ENCODE measurements at regions of chr22 and their contacts with region 1.

Region 1: DNA sequence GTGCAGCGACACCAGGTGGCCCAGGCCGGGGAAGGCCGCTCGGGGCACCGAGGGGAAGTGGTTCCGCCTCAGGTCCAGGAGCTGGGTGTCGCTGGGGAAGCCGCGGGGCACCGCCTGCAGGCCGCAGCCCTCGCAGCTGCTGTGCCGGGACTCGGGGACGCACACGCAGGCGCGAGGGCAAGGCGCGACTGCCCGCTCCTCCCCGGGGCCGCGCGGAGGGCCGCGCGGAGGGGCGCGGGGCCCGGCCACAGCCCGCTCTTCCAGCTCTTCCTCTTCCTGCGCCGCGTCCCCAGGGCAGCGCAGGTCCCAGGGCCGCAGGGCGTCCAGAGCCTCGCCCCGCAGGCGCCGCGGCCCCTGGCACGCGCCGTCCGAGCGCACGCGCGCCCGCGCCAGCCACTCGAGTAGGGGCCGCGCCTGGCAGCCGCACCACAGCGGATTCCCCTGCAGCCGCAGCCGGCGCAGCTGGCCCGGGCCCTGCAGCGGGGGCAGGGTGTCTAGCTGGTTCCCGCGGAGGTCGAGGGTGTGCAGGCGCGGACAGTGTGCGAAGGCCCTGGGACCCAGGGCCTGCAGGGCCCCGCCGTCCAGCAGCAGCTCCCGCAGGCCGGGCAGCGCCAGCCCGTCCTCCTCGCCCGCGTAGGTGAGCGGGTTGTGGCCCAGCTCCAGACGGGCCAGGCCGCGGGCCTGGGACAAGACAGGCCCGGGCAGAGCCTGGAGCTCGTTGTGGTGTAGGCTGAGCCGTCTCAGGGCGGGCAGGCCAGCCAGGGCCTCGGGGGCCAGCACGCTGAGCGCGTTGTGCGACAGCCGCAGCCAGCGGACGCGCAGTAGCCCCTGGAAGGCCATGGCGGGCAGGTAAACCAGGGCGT is 2.8 kb downstream of the CHADL start:
- DNase-seq: peak; percentile 83 to 88 (median 86)
- ATAC-seq: peak; percentile 91
- H3K4me3 ChIP-seq: no peak overlapping the region
- H3K27ac ChIP-seq: peak overlapping the region in 3 of 4 donors; percentile 33 to 60 (median 59)
- H3K4me1 ChIP-seq: peaks cover 21% of the 10 kb centered on the region
- H3K27me3 ChIP-seq: no peaks in the 10 kb centered on the region
- CTCF ChIP-seq: peak; percentile 62 to 86 (median 78)
- POLR2A ChIP-seq: peak in 2 of 3 donors; percentile 40 to 41

Region 2: DNA sequence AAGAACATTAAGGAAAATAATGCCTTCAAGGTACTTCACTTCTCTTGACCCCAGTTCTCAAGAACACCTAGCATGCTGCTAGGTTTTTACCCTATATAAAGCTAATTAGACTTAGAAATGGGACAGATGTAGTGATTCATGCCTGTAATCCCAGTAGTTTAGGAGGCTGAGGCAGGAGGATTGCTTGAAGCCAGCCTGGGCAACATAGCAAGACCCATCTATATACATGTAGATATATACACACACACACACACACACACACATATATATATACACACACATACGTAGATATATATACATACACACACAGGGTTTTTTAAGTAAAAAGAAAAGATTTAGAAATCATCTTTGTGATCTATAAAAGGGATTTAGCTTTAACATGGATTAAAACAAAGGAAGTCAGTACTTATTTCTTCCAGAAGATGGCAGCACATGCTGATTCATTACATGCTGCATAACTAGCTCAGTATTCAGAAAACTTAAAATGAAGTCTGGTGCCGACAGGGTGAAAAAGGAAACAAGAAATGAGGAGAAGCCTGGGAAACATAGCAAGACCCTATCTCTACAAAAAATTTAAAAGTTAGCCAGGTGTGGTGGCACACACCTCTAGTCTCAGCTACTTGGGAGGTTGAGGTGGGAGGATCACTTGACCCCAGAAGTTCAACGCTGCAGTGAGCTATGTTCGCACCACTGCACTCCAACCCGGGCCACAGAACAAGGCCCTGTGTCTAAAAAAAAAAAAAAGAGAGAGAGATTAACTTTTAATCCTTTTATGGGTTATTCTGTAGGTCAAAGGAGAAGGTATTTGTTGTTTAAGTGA is 315.2 kb before region 1 on chr22:
- intact Hi-C with region 1: loop called (anchors 10 kb)
- DNase-seq: peak in 1 of 4 donors; percentile 21
- ATAC-seq: peak; percentile 77
- H3K4me3 ChIP-seq: no peak overlapping the region
- H3K27ac ChIP-seq: no peak overlapping the region
- H3K4me1 ChIP-seq: no peaks in the 10 kb centered on the region
- H3K27me3 ChIP-seq: no peaks in the 10 kb centered on the region
- CTCF ChIP-seq: peak; percentile 38 to 89 (median 83)
- POLR2A ChIP-seq: no peak

Region 3: DNA sequence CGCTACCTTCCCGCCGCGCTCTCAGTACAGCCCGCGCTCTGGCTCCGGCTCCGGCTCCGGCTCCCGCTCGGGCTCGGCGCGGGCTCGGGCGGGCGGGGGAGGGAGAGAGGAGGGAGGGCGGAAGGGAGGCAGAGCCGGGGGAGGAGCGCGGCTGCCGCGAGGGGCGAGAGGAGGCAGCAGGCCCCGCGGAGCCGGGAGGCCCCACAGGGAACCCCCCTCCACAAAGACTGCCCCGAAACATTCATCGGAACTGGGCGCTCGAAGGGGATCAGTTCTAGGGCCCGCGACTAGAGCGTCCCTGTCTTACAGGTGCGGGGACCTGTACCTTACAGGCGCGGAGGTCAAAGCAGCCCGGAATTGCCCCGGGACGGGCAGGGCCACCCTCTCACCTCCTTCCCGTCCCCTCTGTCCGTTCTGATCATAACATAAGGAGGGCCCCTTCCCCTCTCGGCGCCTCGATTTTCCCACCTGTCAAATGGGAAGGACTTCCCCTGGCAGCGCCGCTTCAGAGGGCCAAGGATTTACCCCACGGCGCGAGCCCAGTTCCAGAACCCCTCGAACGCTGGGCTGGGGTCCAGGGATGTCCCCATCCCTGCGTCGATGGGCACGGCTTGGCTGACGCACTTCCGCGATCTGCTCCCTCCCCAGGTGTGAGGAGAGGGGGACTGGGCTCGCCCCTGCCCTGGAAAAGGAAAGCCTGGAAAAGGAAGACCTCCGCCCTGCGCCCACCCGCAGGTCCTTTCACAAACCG is 677.3 kb after region 1 on chr22 and contains the start of gene SHISA8:
- intact Hi-C with region 1: no loop called
- DNase-seq: peak; percentile 37 to 65 (median 51)
- ATAC-seq: peak; percentile 57
- H3K4me3 ChIP-seq: no peak within 1 kb of the TSS
- H3K27ac ChIP-seq: no peak within 1 kb of the TSS
- H3K4me1 ChIP-seq: peaks cover 41% of the 10 kb centered on the region
- H3K27me3 ChIP-seq: peaks cover 0 to 43% of the 10 kb centered on the region in 2 donors
- CTCF ChIP-seq: no peak
- POLR2A ChIP-seq: no peak
- total RNA-seq, gene SHISA8: not detected

Measured in body of pancreas (tissue), 4 donors.